ENCODE measurements at regions of chr11 and their contacts with region 1.

Region 1: DNA sequence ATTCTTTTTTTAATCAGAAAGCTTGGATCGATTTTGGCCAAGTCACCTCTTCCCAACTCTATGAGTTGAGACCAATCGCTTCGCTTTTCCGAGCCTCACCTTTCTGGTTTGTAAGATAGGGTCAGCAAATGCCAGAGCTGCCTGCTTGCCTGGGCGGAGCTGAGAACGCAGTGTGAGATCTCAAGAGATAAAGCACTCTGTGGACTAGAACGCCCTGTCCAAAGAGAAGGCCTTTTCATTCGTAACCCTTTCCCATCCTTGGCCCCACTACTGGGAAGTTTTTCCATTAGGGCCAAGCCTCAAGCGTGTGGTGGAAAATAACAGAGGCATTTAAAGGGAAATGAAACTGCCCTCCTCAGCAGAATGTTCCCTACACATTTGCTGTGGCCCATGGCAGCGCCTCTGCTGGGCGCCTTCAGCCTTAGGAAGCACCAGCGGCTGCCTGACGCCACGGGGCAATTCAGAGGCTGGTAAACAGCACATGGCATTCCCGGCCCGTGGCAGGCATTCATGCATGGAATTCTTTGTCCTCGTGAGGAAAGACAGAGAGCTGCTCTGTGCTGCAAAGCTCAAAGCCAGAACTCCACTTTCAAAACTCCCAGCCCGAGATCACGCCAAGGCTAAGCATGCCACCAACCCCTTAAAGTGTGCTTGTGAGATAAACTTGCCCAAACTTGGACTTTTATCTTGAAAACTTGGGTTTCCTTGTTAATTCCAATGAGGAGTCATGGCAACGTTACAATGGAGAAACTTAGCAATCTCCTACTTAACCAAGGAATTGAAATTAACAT is 38.1 kb downstream of the AHNAK start:
- DNase-seq: peak; percentile 88
- ATAC-seq: peak; percentile 77

Region 2: DNA sequence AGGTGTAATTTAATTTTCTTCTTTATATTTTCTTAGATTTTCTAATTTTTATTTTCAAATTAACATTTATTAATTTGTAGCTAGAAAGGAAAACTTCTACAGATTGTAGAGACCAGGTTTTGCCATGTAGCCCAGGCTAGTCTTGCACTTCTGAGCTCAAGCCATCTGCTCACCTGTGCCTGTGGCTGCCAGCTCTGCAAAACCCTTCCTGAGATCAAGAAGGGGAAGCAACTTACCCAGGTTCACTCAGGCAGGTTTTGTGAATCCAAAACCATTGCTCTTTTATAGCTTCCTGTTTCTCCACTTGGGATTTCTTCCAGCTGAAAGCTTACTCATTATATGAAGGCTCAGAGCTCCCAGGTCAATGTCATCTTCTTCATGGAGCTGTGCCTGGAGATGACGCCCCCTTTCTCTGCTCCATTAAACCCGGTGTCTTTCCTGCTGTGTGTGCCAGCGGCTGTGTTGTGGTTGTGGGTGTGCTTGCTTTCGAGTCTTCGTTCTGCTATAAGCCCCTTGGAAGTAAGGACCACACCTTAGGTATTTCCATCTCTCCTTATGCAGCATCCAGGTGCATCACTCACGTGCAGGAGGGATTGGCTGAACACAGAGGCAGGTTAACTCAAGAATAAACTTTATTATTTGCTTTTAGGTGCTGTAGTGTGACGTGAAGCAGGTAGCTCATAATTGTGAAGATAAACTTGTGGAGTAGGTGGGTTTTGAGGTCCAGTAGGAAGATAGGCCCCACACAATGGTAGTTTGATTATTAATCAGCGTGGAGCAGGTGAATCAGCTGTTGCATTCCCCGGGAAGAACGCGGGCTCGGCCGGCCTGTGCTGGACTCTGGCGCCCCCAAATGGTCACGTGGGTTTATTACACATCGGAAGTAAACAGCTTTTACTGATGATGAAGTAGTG is 426.8 kb before region 1 on chr11:
- intact Hi-C with region 1: no loop called
- DNase-seq: peak; percentile 93
- ATAC-seq: peak; percentile 87

Region 3: DNA sequence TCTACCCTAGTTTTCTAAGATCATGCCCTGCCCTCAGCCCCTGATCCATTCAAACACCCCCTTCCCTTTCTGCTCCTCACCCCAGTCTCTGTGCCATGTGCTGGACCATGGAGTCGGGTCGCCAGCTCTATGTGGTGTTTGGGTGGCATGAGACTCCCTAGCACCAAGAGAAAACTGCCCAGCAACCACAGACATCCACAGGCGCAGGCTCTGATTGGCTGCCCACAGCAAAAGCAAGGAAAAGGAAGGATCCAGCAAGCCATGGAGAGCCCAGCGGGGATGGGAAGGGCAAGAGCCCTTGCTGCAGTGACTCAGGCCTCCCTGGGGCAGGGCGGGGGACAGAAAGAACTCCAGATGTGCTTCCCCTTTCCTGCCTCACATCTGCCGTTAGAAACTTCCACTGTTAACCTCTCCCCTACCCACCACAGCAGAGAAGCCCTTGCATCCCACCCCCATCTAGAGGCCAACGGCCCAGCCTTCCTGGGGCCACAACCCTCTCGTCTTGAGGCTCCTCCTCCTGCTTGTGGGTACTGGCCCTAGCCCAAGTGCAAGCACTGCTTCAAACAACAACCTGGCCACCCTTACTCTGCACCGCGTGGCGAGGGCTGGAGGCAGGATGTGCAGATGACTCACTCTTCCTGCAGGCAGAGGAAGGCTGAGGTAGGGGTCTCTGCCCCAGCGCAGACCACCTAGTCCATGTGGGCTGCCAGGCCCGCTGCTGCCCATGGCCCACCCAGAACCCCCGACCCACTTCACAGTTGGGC is 47.8 kb after region 1 on chr11:
- intact Hi-C with region 1: loop called (anchors 10 kb)
- DNase-seq: peak; percentile 88
- ATAC-seq: peak; percentile 64